ENCODE measurements at regions of chr7 and their contacts with region 1.

Region 1: GRCh38 chr7:40134428-40135316 is at the starts of genes MPLKIP and SUGCT:
- DNase-seq: peak; percentile 81 to 95 (median 91)
- ATAC-seq: peak; percentile 97
- H3K4me3 ChIP-seq: peak within 1 kb of the TSS; percentile 100
- H3K4me3 Mint-ChIP-seq: peak within 1 kb of the TSS; percentile 86 to 99 (median 97)
- H3K27ac ChIP-seq: peak within 1 kb of the TSS; percentile 92
- H3K27ac Mint-ChIP-seq: peak within 1 kb of the TSS; percentile 92 to 98 (median 97)
- H3K4me1 ChIP-seq: peaks cover 21 to 31% of the 10 kb centered on the region in 2 donors
- H3K4me1 Mint-ChIP-seq: peaks cover 15 to 44% (median 31%) of the 10 kb centered on the region in 7 donors
- H3K27me3 ChIP-seq: no peaks in the 10 kb centered on the region
- H3K27me3 Mint-ChIP-seq: peaks cover 0 to 17% (median 0%) of the 10 kb centered on the region in 5 donors
- total RNA-seq, gene MPLKIP: 17.2 to 40.1 (median 33.5) TPM
- total RNA-seq, gene SUGCT: 2.2 to 2.7 (median 2.4) TPM in 4 of 5 experiments, not detected in the other

Region 2: DNA sequence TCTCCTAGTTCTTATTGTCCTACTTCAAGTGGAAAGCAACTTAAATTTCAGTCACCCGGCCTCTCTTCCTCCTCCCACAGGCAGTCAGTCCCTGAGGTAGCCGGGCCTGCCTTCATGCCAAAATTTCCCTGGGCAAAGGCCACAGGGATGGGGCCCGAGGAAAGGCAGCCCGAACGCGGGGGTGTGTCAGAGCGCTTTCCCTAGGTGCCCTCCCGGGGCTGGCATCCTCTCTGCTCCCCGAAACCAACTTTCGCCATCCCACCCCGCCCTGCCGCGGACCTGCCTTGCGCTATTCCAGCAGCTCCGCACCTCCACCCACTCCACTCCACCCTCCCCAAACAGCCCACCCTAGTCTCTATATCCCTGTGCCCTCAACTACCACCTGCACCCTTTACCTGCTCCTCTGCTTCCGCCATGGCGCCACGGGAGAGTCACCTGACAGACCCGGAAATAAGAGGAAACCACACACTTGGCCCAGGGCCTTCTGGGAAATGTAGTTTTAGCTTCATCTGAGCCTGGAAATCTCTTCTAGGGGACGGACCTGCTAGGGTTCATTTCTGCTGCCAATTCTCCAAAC is 1225.8 kb before region 1 on chr7 and contains the start of gene VPS41:
- CTCF ChIA-PET with region 1: no interaction called
- POLR2A ChIA-PET with region 1: no interaction called
- intact Hi-C with region 1: loop called (anchors 1 to 2 kb)
- DNase-seq: peak; percentile 42 to 89 (median 85)
- ATAC-seq: peak; percentile 99
- H3K4me3 ChIP-seq: peak within 1 kb of the TSS; percentile 79
- H3K4me3 Mint-ChIP-seq: peak within 1 kb of the TSS; percentile 92 to 99 (median 97)
- H3K27ac ChIP-seq: peak within 1 kb of the TSS; percentile 72
- H3K27ac Mint-ChIP-seq: peak within 1 kb of the TSS; percentile 82 to 97 (median 91)
- H3K4me1 ChIP-seq: peaks cover 3 to 7% of the 10 kb centered on the region in 2 donors
- H3K4me1 Mint-ChIP-seq: peaks cover 17 to 41% (median 37%) of the 10 kb centered on the region in 7 donors
- H3K27me3 ChIP-seq: no peaks in the 10 kb centered on the region
- H3K27me3 Mint-ChIP-seq: peaks cover 0 to 5% (median 0%) of the 10 kb centered on the region in 5 donors
- total RNA-seq, gene VPS41: 37.1 to 65.0 (median 64.5) TPM

Region 3: DNA sequence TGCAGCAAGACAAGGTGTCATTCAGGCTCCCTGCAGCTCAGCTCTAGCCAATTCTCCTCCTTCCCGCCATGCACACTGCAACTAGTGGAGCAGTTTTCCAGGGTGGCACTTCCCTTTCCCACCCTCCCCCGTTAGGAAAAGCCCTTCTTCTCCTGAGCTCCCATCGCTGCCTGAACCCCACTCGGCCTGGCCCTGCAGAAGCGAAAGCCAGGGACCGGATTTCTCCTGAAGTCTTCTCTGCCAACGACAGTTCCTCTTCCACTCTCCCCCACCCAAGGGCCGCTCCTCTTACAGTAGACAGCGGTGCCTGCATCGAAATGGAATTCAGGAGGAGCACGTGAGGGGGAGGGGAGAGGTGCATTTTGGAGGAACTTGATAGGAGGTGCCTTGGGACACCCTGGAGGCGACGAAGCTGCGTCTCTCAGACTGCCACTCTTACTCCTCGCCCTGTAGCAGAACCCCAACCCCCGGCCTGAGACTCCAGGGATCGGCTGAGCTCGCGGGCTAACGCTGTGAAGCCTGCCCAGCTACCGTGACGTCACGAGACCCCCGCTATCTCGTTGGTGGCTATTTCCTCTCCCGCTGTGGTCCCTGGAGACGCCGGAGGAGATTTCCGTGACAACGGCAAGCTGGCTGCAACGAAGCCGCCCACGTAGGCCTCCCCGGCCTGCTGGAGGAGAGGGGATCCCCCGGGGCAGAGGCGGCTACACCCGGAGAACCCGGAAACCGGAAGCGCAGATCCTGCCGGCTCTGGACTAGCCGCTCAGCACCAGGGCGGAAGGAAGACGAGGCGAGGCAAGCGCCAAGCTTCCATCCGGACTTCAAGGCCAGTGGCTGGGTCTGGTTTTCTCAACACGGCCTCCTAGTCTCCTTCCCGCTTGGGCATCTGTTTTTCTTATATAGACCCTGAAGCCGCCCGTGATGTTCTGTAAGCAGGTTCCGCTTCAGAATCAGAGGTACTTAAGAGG is 401.6 kb before region 1 on chr7:
- CTCF ChIA-PET with region 1: no interaction called
- POLR2A ChIA-PET with region 1: interaction called, 5 read pairs
- intact Hi-C with region 1: loop called (anchors 1 kb)
- DNase-seq: peak; percentile 80 to 96 (median 91)
- ATAC-seq: peak; percentile 95
- H3K4me3 ChIP-seq: peak overlapping the region; percentile 83
- H3K4me3 Mint-ChIP-seq: peak overlapping the region; percentile 78 to 95 (median 92)
- H3K27ac ChIP-seq: peak overlapping the region; percentile 82
- H3K27ac Mint-ChIP-seq: peak overlapping the region; percentile 93 to 98 (median 96)
- H3K4me1 ChIP-seq: peaks cover 11 to 27% of the 10 kb centered on the region in 2 donors
- H3K4me1 Mint-ChIP-seq: peaks cover 13 to 46% (median 40%) of the 10 kb centered on the region in 7 donors
- H3K27me3 ChIP-seq: no peaks in the 10 kb centered on the region
- H3K27me3 Mint-ChIP-seq: peaks cover 0 to 9% (median 0%) of the 10 kb centered on the region in 5 donors

Region 4: DNA sequence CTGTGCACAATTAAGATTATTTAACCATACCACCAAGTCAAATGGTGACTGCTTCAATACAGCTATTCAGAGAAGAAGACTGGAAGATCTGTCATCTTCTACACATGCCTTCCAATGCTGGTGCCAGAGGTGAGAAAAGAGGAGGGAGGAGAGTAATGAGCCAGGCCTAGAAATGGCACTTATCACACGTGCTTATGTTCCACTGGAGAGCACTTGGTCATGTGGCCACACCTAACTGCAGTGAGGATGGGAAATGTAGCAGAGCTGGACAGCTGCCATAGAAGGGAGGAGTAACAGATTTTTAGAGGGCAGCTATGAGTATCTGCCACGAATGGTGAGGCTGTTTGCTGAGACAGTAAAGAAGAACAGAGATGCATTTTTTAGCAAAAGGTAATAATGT is 77.4 kb before region 1 on chr7:
- CTCF ChIA-PET with region 1: no interaction called
- POLR2A ChIA-PET with region 1: no interaction called
- intact Hi-C with region 1: loop called in 1 of 2 experiments (anchors 5 kb)
- DNase-seq: no peak
- ATAC-seq: no peak
- H3K4me3 ChIP-seq: no peak overlapping the region
- H3K4me3 Mint-ChIP-seq: no peak overlapping the region
- H3K27ac ChIP-seq: no peak overlapping the region
- H3K27ac Mint-ChIP-seq: peak overlapping the region in 6 of 9 donors; percentile 14 to 69 (median 44)
- H3K4me1 ChIP-seq: no peaks in the 10 kb centered on the region
- H3K4me1 Mint-ChIP-seq: peaks cover 4 to 22% (median 13%) of the 10 kb centered on the region in 7 donors
- H3K27me3 ChIP-seq: no peaks in the 10 kb centered on the region
- H3K27me3 Mint-ChIP-seq: no peaks in the 10 kb centered on the region

Region 5: DNA sequence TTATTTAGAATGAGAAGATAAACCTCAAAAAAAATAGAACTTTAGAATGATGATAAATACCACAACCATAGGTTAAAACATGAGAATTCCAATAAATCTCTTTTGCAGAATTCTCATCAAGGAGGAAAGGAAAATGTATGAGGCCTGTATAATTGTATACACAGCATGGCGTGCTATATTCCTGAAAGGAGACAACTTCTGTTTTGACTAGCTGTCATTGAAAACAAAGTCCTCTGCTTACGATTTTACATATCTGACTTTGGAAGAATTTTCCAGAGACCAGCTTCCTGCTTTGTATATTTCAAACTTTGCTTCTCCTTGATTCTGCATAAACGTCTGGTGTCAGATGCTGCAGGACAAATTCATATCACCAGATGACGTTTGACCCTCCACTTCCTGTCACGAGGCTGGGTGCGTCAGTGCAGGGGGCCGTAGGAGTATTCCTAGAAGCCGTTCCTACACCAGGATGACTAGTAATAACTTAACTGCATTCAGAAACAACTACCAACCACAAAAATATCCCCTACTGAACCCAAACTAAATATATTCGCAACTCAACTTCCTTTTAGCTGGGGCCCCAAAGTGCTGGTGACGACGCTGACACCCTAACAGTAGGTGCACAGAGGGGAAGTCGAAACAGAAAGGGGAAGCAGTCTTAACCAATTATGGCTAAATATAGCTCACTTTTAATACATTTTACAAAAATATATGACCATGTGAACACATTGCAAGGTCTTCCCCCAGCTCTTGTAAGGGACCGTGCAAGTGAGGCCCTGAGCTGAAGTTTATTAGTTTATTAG is 1746.9 kb after region 1 on chr7:
- CTCF ChIA-PET with region 1: no interaction called
- POLR2A ChIA-PET with region 1: no interaction called
- intact Hi-C with region 1: loop called in 1 of 2 experiments (anchors 10 kb)
- DNase-seq: peak; percentile 27 to 85 (median 64)
- ATAC-seq: peak; percentile 93
- H3K4me3 ChIP-seq: peak overlapping the region; percentile 50
- H3K4me3 Mint-ChIP-seq: peak overlapping the region; percentile 60 to 89 (median 78)
- H3K27ac ChIP-seq: peak overlapping the region; percentile 64
- H3K27ac Mint-ChIP-seq: peak overlapping the region; percentile 84 to 99 (median 94)
- H3K4me1 ChIP-seq: peaks cover 7 to 13% of the 10 kb centered on the region in 2 donors
- H3K4me1 Mint-ChIP-seq: peaks cover 10 to 35% (median 22%) of the 10 kb centered on the region in 7 donors
- H3K27me3 ChIP-seq: no peaks in the 10 kb centered on the region
- H3K27me3 Mint-ChIP-seq: peaks cover 0 to 6% (median 0%) of the 10 kb centered on the region in 5 donors

Measured in naive thymus-derived CD4-positive, alpha-beta T cell (primary cell).